ENCODE measurements at regions of chr17 and their contacts with region 1.

Region 1: DNA sequence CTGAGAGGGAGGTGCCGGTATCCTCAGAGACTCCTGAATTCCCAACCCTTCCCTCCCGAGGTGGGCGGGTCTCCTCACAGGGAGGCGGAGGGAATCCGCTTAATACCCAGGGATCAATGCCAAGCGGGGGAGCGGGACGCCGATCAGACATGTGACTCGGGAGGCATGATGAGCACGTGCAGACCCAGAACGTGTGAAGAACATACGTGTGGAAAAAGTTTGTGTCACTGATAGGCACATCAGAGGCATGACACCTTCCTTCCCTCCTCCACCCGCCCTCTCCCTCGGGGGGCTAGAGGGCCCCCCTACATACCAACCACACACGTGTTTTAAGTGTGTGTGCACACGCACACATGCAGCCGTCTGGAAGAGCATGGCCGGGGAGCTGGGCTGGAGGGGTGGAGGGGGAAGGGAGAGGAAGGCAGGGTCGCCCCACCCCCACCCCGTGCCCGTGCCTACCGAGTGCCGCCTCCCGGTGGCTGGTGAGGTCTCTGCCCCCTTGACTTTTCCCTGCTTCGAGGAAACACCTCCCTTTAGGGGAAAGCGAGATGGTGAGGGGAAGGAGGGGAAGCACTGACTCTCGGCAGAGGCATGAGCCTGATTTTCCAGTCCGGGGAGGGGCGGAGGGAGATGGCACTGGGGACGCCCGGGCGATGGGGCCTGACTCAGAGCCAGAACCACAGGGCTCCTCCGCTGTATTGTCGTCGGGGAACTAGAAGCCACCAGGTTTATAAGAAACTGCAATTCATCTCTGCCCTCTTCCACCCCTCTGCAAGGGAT is 12.1 kb upstream of the TBX21 start:
- DNase-seq: peak; percentile 82
- H3K4me3 Mint-ChIP-seq: peak overlapping the region; percentile 64
- H3K27ac Mint-ChIP-seq: peak overlapping the region; percentile 95
- H3K4me1 Mint-ChIP-seq: peaks cover 73% of the 10 kb centered on the region
- H3K27me3 Mint-ChIP-seq: no peaks in the 10 kb centered on the region

Region 2: DNA sequence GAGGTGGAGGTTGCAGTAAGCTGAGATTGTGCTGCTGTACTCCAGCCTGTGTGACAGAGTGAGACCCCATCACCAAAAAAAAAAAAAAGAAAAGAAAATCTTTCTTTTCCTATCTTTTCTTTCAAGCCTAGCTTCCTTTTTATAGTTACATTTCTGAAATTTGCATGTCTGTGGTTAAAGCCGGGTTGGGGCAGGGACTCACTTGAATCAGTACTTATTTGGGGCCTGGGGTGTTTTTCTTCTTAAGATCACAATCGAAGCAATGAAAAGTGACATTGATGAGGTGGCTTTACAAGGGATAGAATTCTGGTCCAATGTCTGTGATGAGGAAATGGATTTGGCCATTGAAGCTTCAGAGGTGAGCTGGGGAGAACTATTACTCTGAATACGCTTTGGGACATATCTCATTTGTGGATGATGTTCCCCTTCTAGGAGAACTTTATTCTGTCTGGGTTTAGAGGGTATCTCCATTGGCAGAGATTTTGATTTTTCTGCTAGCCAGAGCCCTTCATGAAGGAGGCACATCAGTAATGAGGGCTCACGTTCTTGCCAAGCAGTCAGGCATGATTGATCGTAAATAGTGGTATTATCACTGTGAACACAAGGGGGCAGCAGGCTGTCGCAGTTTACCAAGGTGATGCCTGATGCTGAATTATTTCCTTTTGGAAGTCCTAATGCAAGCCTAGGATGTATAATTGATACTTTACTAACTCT is 56.9 kb before region 1 on chr17:
- intact Hi-C with region 1: loop called (anchors 5 kb)
- DNase-seq: peak; percentile 36
- H3K4me3 Mint-ChIP-seq: no peak overlapping the region
- H3K27ac Mint-ChIP-seq: peak overlapping the region; percentile 61
- H3K4me1 Mint-ChIP-seq: peaks cover 28% of the 10 kb centered on the region
- H3K27me3 Mint-ChIP-seq: no peaks in the 10 kb centered on the region

Region 3: GRCh38 chr17:47705536-47706530 is 15.1 kb before region 1 on chr17:
- intact Hi-C with region 1: loop called (anchors 1 kb)
- DNase-seq: no peak
- H3K4me3 Mint-ChIP-seq: peak overlapping the region; percentile 58
- H3K27ac Mint-ChIP-seq: peak overlapping the region; percentile 89
- H3K4me1 Mint-ChIP-seq: peaks cover 62% of the 10 kb centered on the region
- H3K27me3 Mint-ChIP-seq: no peaks in the 10 kb centered on the region

Region 4: GRCh38 chr17:47733047-47733673 is 12.2 kb after region 1 on chr17 and contains the start of gene TBX21:
- intact Hi-C with region 1: loop called (anchors 1 kb)
- DNase-seq: peak; percentile 82
- H3K4me3 Mint-ChIP-seq: peak within 1 kb of the TSS; percentile 100
- H3K27ac Mint-ChIP-seq: peak within 1 kb of the TSS; percentile 91
- H3K4me1 Mint-ChIP-seq: peaks cover 62% of the 10 kb centered on the region
- H3K27me3 Mint-ChIP-seq: no peaks in the 10 kb centered on the region
- total RNA-seq, gene TBX21: 40.4 and 40.6 TPM in 2 replicates

Region 5: DNA sequence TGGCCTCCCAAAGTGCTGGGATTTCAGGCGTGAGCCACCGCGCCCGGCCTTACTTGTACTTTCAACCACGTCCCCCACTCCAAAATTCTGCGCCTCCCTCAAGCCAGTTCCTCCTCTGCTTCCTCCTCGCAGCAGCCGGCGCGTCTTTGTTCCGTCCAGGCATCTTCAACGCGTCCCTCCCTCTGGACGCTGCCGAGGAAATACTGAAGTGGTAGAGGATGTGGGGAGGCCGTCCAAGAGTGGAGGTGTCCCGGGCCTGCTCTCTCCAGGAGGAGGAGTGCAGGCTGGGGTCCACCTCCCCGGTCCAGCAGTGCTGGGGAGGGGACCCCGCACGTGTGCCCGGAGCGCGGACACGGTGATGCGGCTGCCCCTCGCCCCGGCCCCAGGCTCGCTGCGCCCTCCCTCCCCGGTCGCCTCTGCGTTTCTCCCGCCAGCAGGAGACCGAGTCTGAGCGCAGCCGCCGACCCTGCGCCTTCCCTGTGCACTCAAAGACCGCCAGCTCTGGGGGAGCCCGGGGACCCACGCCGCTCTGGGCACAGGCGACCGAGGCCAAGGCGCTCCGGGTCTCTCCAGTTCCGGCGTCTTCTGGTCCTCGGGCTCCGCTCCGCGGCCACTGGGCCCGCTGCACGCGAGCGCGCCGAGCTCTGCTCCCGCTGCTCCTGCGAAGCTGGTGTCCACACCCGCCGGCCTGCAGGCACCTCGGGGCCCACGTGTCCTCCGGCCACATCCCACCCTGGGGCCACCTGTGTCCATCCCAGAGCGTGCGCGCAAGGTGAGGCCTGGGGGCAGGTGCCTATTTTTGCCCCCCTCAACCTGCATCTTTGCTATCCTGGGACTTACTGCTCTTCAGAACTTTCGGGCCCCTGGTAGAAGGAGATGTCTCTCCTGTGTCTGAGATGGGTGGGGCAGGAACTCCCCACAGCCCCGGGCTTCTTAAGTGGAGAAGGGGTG is 68.9 kb after region 1 on chr17:
- intact Hi-C with region 1: no loop called
- DNase-seq: peak; percentile 34
- H3K4me3 Mint-ChIP-seq: peak overlapping the region; percentile 66
- H3K27ac Mint-ChIP-seq: no peak overlapping the region
- H3K4me1 Mint-ChIP-seq: peaks cover 12% of the 10 kb centered on the region
- H3K27me3 Mint-ChIP-seq: peaks cover 66% of the 10 kb centered on the region

Region 6: DNA sequence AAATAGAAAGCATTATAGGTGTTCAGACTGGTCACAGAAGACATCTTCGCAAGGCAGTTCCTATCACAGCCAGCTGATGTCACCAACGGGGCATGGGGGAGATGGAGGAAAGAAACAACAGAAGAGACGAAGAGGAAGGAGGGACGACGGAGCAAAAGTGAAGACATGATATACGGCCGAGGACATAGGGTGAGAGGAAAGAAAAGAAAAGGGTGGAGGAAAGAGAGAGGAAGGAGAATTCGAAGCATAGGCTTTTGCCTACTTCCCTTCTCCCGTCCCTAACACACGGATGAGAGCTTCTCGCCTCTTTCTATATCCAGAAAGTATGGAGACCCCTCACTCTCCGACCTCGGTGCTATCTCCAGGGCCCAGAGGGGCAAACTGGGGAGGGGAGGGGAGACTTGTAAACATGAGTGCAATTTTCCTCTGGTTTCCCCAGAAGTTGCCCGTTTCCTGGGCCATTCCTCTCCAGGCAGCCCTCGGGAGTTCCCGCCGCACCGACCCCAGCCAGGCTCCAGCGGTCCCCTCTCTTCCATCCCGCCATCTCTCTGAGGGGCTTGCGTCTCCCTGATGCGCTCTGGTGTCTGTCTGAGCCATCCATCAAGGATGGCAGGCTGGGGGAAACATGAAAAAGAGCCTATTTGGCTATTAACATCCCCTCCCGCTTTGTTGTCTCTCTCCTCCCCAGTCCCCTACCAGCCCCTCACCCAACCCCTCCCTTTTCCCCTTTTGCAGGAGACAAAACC is 290.6 kb after region 1 on chr17:
- intact Hi-C with region 1: no loop called
- DNase-seq: peak; percentile 48
- H3K4me3 Mint-ChIP-seq: peak overlapping the region; percentile 82
- H3K27ac Mint-ChIP-seq: no peak overlapping the region
- H3K4me1 Mint-ChIP-seq: peaks cover 15% of the 10 kb centered on the region
- H3K27me3 Mint-ChIP-seq: peaks cover 51% of the 10 kb centered on the region

Measured in activated T-helper 2 cell treated with anti-CD3 and anti-CD28 coated beads, Interferon-gamma antibody, Interleukin-2, Interleukin-4, amounts not matched to agents 10 μg/mL and 5 μg/mL and 100 μg/mL, durations not matched to agents 14 hours and 24 hours and 36 hours (primary cell).